CD4-positive, alpha-beta memory T cell (primary cell): ENCODE measurements at regions of chr5 and their contacts with region 1.

Region 1: GRCh38 chr5:146965761-146966659 is 87.5 kb upstream of the PPP2R2B start:
- DNase-seq: peak; percentile 41 to 66 (median 55)
- H3K4me3 ChIP-seq: no peak overlapping the region
- H3K4me3 Mint-ChIP-seq: no peak overlapping the region
- H3K27ac ChIP-seq: no peak overlapping the region
- H3K27ac Mint-ChIP-seq: peak overlapping the region in 1 of 7 donors; percentile 6
- H3K4me1 ChIP-seq: no peaks in the 10 kb centered on the region
- H3K4me1 Mint-ChIP-seq: peaks cover 0 to 2% (median 0%) of the 10 kb centered on the region in 4 donors
- H3K27me3 ChIP-seq: no peaks in the 10 kb centered on the region
- H3K27me3 Mint-ChIP-seq: no peaks in the 10 kb centered on the region

Region 2: DNA sequence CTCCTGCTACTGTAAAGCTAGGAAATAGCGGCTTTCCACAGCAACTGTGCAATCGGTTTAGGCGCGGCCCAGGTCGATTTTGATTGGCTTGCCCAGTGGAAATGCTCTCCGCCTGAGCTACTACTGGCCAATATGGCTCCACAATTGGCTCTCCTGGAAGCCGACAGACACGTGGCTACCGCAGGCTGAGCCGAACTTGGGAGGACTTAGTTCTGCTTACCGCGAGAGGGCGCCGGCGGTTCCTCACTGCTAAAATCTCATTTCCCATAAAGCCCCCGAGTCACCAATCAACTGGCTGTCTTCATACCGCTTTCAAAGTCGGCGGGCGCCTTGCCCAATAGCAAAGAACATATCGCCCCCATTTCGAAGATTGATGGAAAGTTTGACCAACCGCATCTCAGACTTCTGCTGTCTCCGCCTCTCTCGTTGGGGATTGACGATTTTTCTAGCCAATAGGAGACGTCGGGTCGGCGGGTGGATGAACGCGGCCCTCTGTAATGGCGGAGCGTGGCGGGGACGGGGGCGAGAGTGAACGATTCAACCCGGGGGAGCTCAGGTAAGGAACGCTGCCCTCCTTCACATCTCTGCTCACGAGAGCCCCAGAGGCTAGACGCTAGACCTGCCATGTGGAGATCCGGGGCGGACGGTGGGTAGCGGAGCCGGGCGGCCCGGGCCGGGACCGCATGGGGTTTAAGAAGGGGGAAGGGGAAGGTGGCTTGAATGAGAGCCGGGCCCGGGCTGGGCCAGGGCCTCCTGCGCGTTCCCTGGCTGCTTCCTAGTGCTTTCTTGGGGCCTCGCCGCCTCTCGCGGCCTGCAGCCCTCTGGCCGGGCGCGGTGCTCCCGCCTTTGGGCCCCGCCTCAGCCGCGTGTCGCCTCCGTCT is 518.9 kb before region 1 on chr5 and contains the start of gene TCERG1:
- CTCF ChIA-PET with region 1: no interaction called
- POLR2A ChIA-PET with region 1: no interaction called
- intact Hi-C with region 1: loop called (anchors 5 kb)
- DNase-seq: peak; percentile 99
- H3K4me3 ChIP-seq: peak within 1 kb of the TSS; percentile 79 to 94
- H3K4me3 Mint-ChIP-seq: peak within 1 kb of the TSS; percentile 97 to 100 (median 99)
- H3K27ac ChIP-seq: peak within 1 kb of the TSS; percentile 88
- H3K27ac Mint-ChIP-seq: peak within 1 kb of the TSS; percentile 97 to 100 (median 99)
- H3K4me1 ChIP-seq: peaks cover 38% of the 10 kb centered on the region
- H3K4me1 Mint-ChIP-seq: peaks cover 29 to 49% (median 39%) of the 10 kb centered on the region in 4 donors
- H3K27me3 ChIP-seq: no peaks in the 10 kb centered on the region
- H3K27me3 Mint-ChIP-seq: no peaks in the 10 kb centered on the region
- total RNA-seq, gene TCERG1: 67.9 to 68.5 TPM

Region 3: DNA sequence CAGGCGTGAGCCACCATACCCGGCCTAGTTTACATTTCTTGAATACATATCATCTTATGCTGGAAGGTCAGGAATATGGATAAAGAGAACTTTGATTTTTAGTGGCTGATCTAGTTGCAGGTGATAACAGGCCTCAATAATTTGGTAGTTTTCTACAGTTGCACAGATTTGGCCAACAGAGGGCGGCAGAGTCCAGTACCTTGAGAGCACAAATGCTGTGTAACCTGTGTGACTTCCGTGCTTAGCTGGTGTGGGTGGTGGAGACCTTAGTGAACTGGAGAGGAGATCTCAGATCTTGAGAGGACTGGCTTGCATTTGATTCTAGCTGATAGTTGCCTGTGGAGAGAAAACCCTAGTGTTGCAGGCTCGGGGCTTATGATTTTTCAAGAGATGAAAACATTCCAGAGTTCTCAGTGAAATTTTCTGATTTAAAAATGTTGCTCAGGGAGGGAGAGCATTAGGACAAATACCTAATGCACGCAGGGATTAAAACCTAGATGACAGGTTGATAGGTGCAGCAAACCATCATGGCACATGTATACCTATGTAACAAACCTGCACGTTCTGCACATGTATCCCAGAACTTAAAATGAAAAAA is 432.7 kb before region 1 on chr5:
- CTCF ChIA-PET with region 1: interaction called, 69 read pairs
- POLR2A ChIA-PET with region 1: no interaction called
- intact Hi-C with region 1: loop called (anchors 1 kb)
- DNase-seq: peak; percentile 59 to 66 (median 63)
- H3K4me3 ChIP-seq: no peak overlapping the region
- H3K4me3 Mint-ChIP-seq: no peak overlapping the region
- H3K27ac ChIP-seq: no peak overlapping the region
- H3K27ac Mint-ChIP-seq: peak overlapping the region in 2 of 7 donors; percentile 0 to 30
- H3K4me1 ChIP-seq: no peaks in the 10 kb centered on the region
- H3K4me1 Mint-ChIP-seq: peaks cover 2 to 5% (median 4%) of the 10 kb centered on the region in 4 donors
- H3K27me3 ChIP-seq: no peaks in the 10 kb centered on the region
- H3K27me3 Mint-ChIP-seq: peaks cover 0 to 3% of the 10 kb centered on the region in 2 donors

Region 4: DNA sequence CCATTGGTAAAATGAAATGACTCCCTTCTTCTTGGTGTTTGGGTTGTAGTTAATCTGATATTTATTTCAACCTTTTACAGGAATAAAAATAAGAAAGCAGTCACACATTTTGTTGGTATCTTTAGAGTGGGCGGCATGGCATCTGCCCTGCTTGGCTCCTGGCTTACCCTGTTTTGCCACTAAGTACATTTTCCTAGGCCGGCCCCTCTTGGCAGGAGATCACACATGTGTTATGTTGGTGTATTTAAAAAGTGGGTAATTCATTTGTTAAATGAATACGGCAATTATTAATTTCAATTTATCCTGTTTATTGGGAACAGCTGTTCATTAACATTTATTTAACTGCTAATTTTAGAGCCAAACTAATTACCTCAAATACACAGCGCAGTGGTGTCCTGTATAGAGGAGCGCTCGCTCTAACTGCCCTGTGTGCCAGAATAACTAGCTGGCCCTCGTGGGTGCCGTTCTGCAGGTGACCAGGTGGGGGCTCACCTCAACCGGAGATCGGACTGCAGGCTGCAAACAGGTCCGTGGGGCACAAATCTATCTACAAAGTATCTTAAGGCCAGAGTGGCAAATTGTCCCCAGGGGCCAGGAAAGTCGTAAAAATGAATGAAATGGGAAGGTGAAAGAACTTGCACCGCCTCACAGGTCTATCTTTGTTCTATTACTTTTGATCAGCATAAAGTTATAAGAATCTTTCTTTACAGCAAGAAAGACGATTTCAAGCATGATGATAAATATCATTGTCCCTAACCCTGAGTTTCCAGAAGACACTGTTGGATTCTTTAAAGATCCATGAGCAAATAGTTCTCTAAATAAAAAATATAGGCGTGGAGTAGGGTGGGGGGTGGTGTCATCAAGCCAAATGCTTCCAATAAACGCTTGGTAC is 423.8 kb before region 1 on chr5:
- CTCF ChIA-PET with region 1: interaction called, 67 read pairs
- POLR2A ChIA-PET with region 1: no interaction called
- intact Hi-C with region 1: loop called (anchors 1 kb)
- DNase-seq: peak; percentile 47 to 63 (median 56)
- H3K4me3 ChIP-seq: no peak overlapping the region
- H3K4me3 Mint-ChIP-seq: no peak overlapping the region
- H3K27ac ChIP-seq: no peak overlapping the region
- H3K27ac Mint-ChIP-seq: peak overlapping the region in 1 of 7 donors; percentile 52
- H3K4me1 ChIP-seq: no peaks in the 10 kb centered on the region
- H3K4me1 Mint-ChIP-seq: peaks cover 0 to 4% (median 2%) of the 10 kb centered on the region in 4 donors
- H3K27me3 ChIP-seq: no peaks in the 10 kb centered on the region
- H3K27me3 Mint-ChIP-seq: peaks cover 0 to 1% of the 10 kb centered on the region in 2 donors

Region 5: DNA sequence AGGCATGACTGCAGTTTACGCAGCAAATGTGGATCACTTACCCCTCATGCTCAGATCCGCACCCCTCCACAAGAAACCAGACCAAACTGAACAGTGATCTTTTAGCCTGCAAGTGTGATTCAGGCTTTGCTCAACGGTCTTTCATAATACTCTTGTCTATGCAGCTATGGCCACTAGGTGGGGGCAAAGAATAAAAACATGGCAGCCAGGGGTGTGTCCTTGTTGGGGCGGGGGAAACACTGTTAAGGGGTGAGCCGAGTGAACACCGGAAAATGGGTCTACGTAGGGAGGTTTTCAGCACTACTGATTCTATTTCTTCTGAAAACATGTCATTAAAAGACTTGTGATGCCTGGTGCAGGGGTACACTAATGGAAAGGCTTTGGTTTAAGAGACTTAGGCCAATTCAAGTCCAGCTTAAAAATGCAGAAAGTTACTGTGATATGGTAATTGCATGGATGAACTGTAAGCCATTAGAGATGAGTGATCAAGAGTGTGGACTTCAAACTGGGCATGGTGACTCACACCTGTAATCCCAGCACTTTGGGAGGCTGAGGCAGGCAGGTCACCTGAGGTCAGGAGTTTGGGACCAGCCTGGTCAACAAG is 400.1 kb before region 1 on chr5:
- CTCF ChIA-PET with region 1: interaction called, 15 read pairs
- POLR2A ChIA-PET with region 1: no interaction called
- intact Hi-C with region 1: loop called (anchors 1 kb)
- DNase-seq: peak; percentile 33 to 54 (median 43)
- H3K4me3 ChIP-seq: no peak overlapping the region
- H3K4me3 Mint-ChIP-seq: peak overlapping the region in 2 of 8 donors; percentile 45 to 47
- H3K27ac ChIP-seq: no peak overlapping the region
- H3K27ac Mint-ChIP-seq: no peak overlapping the region
- H3K4me1 ChIP-seq: no peaks in the 10 kb centered on the region
- H3K4me1 Mint-ChIP-seq: peaks cover 0 to 6% (median 4%) of the 10 kb centered on the region in 4 donors
- H3K27me3 ChIP-seq: no peaks in the 10 kb centered on the region
- H3K27me3 Mint-ChIP-seq: peaks cover 2% of the 10 kb centered on the region in 2 donors

Region 6: DNA sequence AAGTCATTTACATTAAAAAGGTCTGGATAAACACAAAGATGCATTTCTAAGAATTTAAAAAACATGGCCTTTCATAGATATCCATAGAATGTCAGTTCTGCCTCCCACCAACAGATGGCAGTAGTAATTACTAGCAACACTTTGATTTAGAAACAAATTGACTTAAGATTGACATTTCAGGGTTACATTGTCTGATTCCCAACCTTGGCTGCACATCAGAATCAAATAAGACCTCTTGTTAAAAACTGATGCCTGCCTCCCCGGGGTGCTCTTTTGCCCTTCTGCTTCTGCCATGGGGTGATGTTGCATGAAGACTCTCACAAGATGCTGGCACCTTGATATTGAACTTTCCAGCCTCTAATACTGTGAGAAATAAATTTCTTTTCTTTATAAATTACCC is 303.8 kb before region 1 on chr5:
- CTCF ChIA-PET with region 1: interaction called, 159 read pairs
- POLR2A ChIA-PET with region 1: no interaction called
- intact Hi-C with region 1: loop called (anchors 1 kb)
- DNase-seq: peak in 4 of 5 donors; percentile 28 to 42 (median 40)
- H3K4me3 ChIP-seq: no peak overlapping the region
- H3K4me3 Mint-ChIP-seq: no peak overlapping the region
- H3K27ac ChIP-seq: no peak overlapping the region
- H3K27ac Mint-ChIP-seq: no peak overlapping the region
- H3K4me1 ChIP-seq: no peaks in the 10 kb centered on the region
- H3K4me1 Mint-ChIP-seq: peaks cover 0 to 5% (median 2%) of the 10 kb centered on the region in 4 donors
- H3K27me3 ChIP-seq: no peaks in the 10 kb centered on the region
- H3K27me3 Mint-ChIP-seq: no peaks in the 10 kb centered on the region